GM10248 (cell line): ENCODE measurements at regions of chr2 and their contacts with region 1.

Region 1: DNA sequence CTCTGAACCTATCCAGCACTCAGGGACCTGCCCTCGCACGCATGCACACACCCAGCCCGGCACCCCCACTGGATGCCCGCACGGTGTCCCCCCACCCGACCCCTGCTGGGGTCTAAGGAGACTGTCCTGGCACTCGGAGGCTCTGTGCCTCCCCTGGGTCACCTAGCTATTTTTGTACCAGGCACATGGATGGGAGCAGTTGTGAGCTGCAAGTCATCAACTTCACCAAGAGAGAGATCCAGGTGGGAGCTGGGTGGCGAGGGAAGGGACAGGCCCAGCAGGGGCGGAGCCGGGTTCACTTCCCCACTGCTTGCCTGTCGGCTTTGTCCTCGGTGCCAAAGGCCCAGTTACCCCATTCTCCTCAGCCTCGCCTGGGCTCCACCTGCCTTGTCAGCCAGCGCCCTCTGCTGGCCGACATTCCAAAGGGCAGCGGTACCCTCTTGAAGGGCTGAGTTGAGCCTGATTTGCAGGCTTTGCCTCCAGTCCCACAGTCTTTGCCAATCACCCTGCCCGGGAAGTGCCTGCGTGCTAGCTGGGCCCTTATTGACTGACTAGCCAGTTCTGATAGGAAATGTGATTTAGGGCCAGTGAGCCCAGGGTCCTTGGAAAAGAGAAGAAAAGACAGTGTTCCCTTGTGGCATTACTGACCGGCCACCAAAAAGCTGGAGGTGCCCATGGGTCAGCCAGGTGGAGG is 5.8 kb downstream of the NT5DC4 start:
- DNase-seq: peak; percentile 93
- CTCF ChIP-seq: peak; percentile 99

Region 2: DNA sequence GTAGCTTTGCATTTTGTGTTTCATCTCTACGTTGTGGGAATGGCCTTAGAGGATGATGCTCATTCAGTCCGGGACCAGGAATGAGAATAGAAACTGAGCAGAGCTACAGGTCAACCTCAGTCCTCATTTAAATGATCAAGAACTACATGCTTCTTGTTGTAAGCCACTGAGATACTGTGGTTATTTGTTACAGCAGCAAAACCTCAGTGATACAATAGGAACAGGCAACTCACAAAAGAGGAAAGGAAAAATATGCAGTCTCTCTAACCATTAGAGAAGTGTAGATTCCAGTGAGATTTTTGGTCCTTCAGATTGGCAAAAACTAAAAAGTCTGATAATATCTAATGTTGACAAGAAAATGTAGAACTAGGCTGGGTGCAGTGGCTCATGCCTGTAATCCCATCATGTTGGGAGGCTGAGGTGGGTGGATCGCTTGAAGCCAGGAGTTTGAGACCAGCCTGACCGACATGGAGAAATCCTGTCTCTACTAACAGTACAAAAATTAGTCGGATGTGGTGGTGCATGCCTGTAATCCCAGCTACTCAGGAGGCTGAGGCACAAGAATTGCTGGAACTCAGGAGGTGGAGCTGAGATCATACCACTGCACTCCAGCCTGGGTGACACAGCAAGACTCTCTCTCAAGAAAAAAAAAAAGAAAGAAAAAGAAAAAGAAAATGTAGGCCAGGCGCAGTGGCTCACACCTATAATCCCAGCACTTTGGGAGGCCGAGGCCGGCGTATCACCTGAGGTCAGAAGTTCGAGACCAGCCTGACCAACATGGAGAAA is 128.9 kb before region 1 on chr2:
- CTCF ChIA-PET with region 1: interaction called, 147 read pairs
- POLR2A ChIA-PET with region 1: no interaction called
- DNase-seq: no peak
- CTCF ChIP-seq: no peak

Region 3: GRCh38 chr2:112645310-112646101 is 81.1 kb before region 1 on chr2 and contains the start of gene SLC20A1:
- CTCF ChIA-PET with region 1: interaction called, 87 read pairs
- POLR2A ChIA-PET with region 1: interaction called, 5 read pairs
- DNase-seq: peak; percentile 100
- CTCF ChIP-seq: peak; percentile 58

Region 4: DNA sequence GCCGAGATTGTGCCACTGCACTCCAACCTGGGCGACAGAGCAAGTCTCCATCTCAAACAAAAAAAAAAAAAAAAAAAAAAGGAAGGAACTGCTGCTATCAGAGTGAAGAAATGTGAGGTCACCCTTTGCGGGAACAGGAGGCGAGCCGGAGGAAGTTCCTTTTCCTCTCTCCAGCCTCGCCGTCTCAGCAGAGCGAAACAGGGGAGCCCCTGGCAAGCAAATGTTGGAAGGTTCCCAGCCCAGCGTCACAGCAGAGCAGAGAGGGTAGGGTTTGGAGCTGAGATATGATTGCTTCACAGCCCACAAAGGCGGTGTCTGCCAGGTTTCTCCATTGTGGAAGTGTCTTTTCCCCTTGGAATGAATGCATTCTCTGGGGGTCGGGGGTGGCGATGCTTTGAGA is 52.4 kb before region 1 on chr2:
- CTCF ChIA-PET with region 1: interaction called, 21 read pairs
- POLR2A ChIA-PET with region 1: no interaction called
- DNase-seq: no peak
- CTCF ChIP-seq: no peak

Region 5: GRCh38 chr2:112701052-112701451 is 25.6 kb before region 1 on chr2:
- CTCF ChIA-PET with region 1: interaction called, 99 read pairs
- POLR2A ChIA-PET with region 1: no interaction called
- DNase-seq: no peak
- CTCF ChIP-seq: no peak

Region 6: GRCh38 chr2:112757265-112757664 is 30.6 kb after region 1 on chr2:
- CTCF ChIA-PET with region 1: interaction called, 14 read pairs
- POLR2A ChIA-PET with region 1: no interaction called
- DNase-seq: no peak
- CTCF ChIP-seq: no peak

Region 7: GRCh38 chr2:112958428-112959108 is 231.9 kb after region 1 on chr2:
- CTCF ChIA-PET with region 1: interaction called, 16 read pairs
- POLR2A ChIA-PET with region 1: no interaction called
- DNase-seq: peak; percentile 59
- CTCF ChIP-seq: peak; percentile 79